Natural killer cell (primary cell): ENCODE measurements at regions of chr14 and their contacts with region 1.

Region 1: GRCh38 chr14:24481622-24482324 is 26.3 kb downstream of the CMA1 start:
- DNase-seq: peak; percentile 42 to 57
- ATAC-seq: peak; percentile 76 to 98 (median 78)
- H3K4me3 ChIP-seq: no peak overlapping the region
- H3K4me3 Mint-ChIP-seq: peak overlapping the region; percentile 87
- H3K27ac ChIP-seq: no peak overlapping the region
- H3K27ac Mint-ChIP-seq: peak overlapping the region in 1 of 2 donors; percentile 75
- H3K4me1 ChIP-seq: peaks cover 15% of the 10 kb centered on the region
- H3K4me1 Mint-ChIP-seq: peaks cover 12 to 20% of the 10 kb centered on the region in 2 donors
- H3K27me3 ChIP-seq: no peaks in the 10 kb centered on the region
- H3K27me3 Mint-ChIP-seq: no peaks in the 10 kb centered on the region
- CTCF ChIP-seq: peak; percentile 70

Region 2: DNA sequence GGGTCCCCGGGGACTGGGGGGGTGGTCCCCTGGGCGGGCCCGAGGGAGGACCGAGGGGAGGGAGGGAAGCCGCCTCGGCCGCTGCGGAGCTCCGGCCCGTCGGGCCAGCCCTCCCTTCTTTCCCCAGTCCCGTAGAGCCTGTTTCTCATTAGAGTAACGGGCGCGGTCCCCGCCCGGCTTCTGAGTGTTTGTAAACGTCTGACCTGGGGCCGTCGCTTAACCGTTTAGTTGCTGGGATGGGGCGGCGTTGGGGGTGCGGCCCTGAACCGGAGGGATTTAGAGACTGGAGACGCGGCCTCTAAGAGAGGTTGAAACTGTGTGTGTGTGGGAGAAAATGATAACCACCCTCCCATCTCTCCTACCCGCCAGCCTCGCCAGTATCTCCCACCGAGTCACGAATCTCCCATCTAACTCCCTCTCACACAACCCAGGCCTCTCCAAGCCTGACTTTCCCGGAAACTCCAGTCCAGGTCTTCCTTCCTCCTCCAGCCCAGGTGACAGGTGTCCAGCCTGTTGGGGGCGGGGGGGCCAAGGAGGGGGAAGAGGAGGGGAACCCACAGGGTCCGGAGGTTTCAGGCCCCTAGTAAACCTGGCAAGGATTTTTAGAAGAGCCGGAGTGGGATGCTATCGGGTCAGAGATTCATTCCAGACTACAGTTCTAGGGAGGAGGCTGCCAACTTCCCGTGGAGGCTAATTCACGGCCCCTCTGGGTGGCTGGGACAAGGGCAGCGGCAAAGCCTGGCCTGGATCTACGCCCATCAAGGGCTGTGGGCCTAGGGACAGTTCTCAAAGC is 114.9 kb before region 1 on chr14:
- intact Hi-C with region 1: no loop called
- DNase-seq: peak; percentile 25 to 35
- ATAC-seq: peak; percentile 27 to 45 (median 36)
- H3K4me3 ChIP-seq: peak overlapping the region; percentile 27
- H3K4me3 Mint-ChIP-seq: peak overlapping the region; percentile 82
- H3K27ac ChIP-seq: no peak overlapping the region
- H3K27ac Mint-ChIP-seq: peak overlapping the region in 1 of 2 donors; percentile 53
- H3K4me1 ChIP-seq: peaks cover 37% of the 10 kb centered on the region
- H3K4me1 Mint-ChIP-seq: peaks cover 19 to 34% of the 10 kb centered on the region in 2 donors
- H3K27me3 ChIP-seq: peaks cover 39% of the 10 kb centered on the region
- H3K27me3 Mint-ChIP-seq: peaks cover 29 to 37% of the 10 kb centered on the region in 2 donors
- CTCF ChIP-seq: no peak

Region 3: DNA sequence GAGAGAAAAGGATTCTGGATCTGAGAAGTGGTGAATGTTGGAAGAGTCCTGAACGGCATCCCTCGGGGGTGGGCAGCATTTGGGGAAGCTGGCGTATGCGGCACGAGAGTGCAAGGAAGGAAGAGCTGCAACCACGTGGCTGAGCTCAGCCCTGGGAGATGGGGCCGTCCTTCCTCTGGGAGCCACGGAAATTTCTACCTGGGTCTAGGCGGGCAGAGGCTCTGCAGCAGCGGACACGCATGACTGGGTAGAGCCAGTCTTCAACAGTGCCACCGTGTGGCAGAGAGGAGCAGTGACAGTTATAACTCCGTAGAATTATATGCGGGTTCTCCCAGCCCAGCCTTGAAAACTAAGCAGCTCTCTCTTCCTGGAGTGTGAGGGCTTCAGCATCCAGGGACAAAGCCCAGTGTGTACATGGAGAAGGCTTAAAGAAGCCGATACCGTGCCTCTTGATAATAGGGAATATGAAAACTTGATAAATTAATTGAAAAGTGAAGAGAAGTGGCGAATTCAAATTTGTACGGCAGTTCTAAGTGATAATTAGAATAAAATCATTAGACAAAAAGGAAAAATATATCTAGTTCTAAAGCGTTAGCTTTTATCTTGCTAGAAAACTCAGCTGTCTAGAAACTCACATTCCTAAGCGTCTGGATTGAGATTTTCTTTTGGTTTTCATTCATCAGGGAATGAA is 651.1 kb after region 1 on chr14:
- intact Hi-C with region 1: loop called (anchors 5 kb)
- DNase-seq: peak; percentile 32 to 74
- ATAC-seq: peak; percentile 93 to 100 (median 99)
- H3K4me3 ChIP-seq: no peak overlapping the region
- H3K4me3 Mint-ChIP-seq: no peak overlapping the region
- H3K27ac ChIP-seq: no peak overlapping the region
- H3K27ac Mint-ChIP-seq: no peak overlapping the region
- H3K4me1 ChIP-seq: peaks cover 5% of the 10 kb centered on the region
- H3K4me1 Mint-ChIP-seq: peaks cover 8 to 9% of the 10 kb centered on the region in 2 donors
- H3K27me3 ChIP-seq: peaks cover 18% of the 10 kb centered on the region
- H3K27me3 Mint-ChIP-seq: peaks cover 42 to 63% of the 10 kb centered on the region in 2 donors
- CTCF ChIP-seq: peak; percentile 80

Region 4: GRCh38 chr14:25150934-25151790 is 669.4 kb after region 1 on chr14:
- intact Hi-C with region 1: loop called (anchors 1 kb)
- DNase-seq: peak in 1 of 2 donors; percentile 46
- ATAC-seq: peak in 2 of 3 donors; percentile 65 to 70
- H3K4me3 ChIP-seq: no peak overlapping the region
- H3K4me3 Mint-ChIP-seq: no peak overlapping the region
- H3K27ac ChIP-seq: no peak overlapping the region
- H3K27ac Mint-ChIP-seq: no peak overlapping the region
- H3K4me1 ChIP-seq: no peaks in the 10 kb centered on the region
- H3K4me1 Mint-ChIP-seq: no peaks in the 10 kb centered on the region
- H3K27me3 ChIP-seq: peaks cover 2% of the 10 kb centered on the region
- H3K27me3 Mint-ChIP-seq: peaks cover 18 to 39% of the 10 kb centered on the region in 2 donors
- CTCF ChIP-seq: peak; percentile 95

Region 5: GRCh38 chr14:25400607-25401206 is 918.9 kb after region 1 on chr14:
- intact Hi-C with region 1: loop called (anchors 2 kb)
- DNase-seq: peak in 1 of 2 donors; percentile 36
- ATAC-seq: peak; percentile 47 to 74 (median 62)
- H3K4me3 ChIP-seq: no peak overlapping the region
- H3K4me3 Mint-ChIP-seq: no peak overlapping the region
- H3K27ac ChIP-seq: no peak overlapping the region
- H3K27ac Mint-ChIP-seq: no peak overlapping the region
- H3K4me1 ChIP-seq: no peaks in the 10 kb centered on the region
- H3K4me1 Mint-ChIP-seq: peaks cover 4 to 5% of the 10 kb centered on the region in 2 donors
- H3K27me3 ChIP-seq: peaks cover 4% of the 10 kb centered on the region
- H3K27me3 Mint-ChIP-seq: peaks cover 5 to 6% of the 10 kb centered on the region in 2 donors
- CTCF ChIP-seq: peak; percentile 83